ENCODE measurements at regions of chr13 and their contacts with region 1.

Region 1: GRCh38 chr13:23466144-23467002 is 32.9 kb upstream of the SACS start:
- DNase-seq: peak; percentile 72
- H3K4me3 Mint-ChIP-seq: peak overlapping the region; percentile 58
- H3K27ac Mint-ChIP-seq: no peak overlapping the region
- H3K4me1 Mint-ChIP-seq: peaks cover 5% of the 10 kb centered on the region
- H3K27me3 Mint-ChIP-seq: peaks cover 6% of the 10 kb centered on the region

Region 2: DNA sequence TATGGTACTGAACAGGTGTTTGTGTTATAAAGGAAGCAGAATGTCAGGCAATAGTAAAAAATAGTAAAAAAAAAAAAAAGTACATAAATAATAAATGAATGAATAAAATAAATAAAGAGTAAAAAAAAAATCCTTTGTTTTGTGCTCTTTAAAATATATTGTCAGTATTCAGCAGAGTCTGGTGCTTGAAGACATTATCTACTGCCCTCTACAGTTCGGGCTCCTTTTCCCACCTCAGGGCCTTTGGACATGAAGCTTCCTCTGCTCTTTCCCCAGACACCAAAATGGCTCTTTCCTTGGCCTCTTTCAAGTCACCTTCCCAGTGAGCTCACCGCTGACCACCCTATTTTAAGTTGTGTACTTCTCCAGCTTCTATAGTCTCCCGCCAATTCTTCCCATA is 241.3 kb after region 1 on chr13:
- CTCF ChIA-PET with region 1: interaction called, 3 read pairs
- POLR2A ChIA-PET with region 1: no interaction called
- intact Hi-C with region 1: loop called (anchors 5 kb)
- DNase-seq: no peak
- H3K4me3 Mint-ChIP-seq: no peak overlapping the region
- H3K27ac Mint-ChIP-seq: no peak overlapping the region
- H3K4me1 Mint-ChIP-seq: no peaks in the 10 kb centered on the region
- H3K27me3 Mint-ChIP-seq: no peaks in the 10 kb centered on the region

Region 3: GRCh38 chr13:23741879-23742510 is 275.6 kb after region 1 on chr13:
- CTCF ChIA-PET with region 1: no interaction called
- POLR2A ChIA-PET with region 1: no interaction called
- intact Hi-C with region 1: loop called (anchors 1 kb)
- DNase-seq: no peak
- H3K4me3 Mint-ChIP-seq: no peak overlapping the region
- H3K27ac Mint-ChIP-seq: no peak overlapping the region
- H3K4me1 Mint-ChIP-seq: peaks cover 25% of the 10 kb centered on the region
- H3K27me3 Mint-ChIP-seq: peaks cover 3% of the 10 kb centered on the region

Region 4: GRCh38 chr13:23871616-23872220 is 405.3 kb after region 1 on chr13:
- CTCF ChIA-PET with region 1: interaction called, 5 read pairs
- POLR2A ChIA-PET with region 1: no interaction called
- intact Hi-C with region 1: loop called (anchors 1 kb)
- DNase-seq: no peak
- H3K4me3 Mint-ChIP-seq: no peak overlapping the region
- H3K27ac Mint-ChIP-seq: no peak overlapping the region
- H3K4me1 Mint-ChIP-seq: no peaks in the 10 kb centered on the region
- H3K27me3 Mint-ChIP-seq: no peaks in the 10 kb centered on the region

Region 5: DNA sequence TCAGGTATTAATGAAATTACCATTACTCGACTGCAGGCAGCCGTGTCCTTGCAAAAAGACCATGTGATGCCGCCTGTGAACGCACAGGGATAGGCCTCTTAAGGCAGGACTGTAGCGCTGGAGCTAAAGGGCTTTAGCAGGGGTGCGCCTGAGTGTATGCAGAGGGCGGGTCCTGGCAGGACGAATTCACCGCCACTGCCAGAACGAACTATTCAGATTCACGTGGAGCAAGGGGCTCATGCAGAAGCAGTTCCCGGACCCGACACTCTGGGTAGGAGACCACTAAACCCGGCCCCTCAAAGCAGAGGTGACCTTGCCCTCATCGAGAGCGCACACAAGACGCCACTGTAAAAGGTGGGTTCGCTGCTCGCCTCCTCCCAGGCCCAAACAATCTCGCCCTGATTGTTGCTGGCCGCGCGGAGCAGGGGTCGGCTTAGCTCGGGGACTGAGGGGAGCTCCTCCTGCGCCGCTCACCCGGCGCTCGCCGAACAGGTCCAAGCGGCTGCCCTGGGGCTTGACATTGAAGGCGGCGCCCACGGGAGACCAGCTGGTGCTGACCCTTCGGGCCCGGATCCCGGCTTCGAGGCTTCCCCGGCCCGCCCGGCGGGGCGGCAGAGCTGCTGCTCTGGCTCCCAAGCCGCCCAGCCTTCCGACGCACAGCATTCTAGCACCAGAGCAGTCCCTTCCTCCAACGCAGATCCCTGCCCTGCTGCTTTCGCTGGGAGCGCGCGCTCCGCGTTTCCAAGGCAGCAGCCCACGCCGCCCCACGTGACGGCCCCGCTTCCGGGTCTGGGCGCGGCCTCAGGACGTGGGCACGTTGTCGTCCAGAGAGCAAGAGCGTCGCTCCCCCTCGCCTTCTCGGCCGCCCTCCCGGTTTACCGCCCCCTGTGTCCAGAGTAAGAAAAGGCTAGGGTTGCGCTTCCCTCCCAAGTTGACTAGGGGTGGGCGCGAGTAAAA is 422.6 kb after region 1 on chr13 and contains the start of gene MIPEP:
- CTCF ChIA-PET with region 1: interaction called, 7 read pairs
- POLR2A ChIA-PET with region 1: no interaction called
- intact Hi-C with region 1: loop called (anchors 5 kb)
- DNase-seq: peak; percentile 95
- H3K4me3 Mint-ChIP-seq: peak within 1 kb of the TSS; percentile 82
- H3K27ac Mint-ChIP-seq: peak within 1 kb of the TSS; percentile 62
- H3K4me1 Mint-ChIP-seq: peaks cover 21% of the 10 kb centered on the region
- H3K27me3 Mint-ChIP-seq: no peaks in the 10 kb centered on the region
- total RNA-seq, gene MIPEP: 16.6 to 16.7 TPM

Region 6: GRCh38 chr13:23899555-23899954 is 433.2 kb after region 1 on chr13:
- CTCF ChIA-PET with region 1: interaction called, 11 read pairs
- POLR2A ChIA-PET with region 1: no interaction called
- intact Hi-C with region 1: no loop called
- DNase-seq: no peak
- H3K4me3 Mint-ChIP-seq: no peak overlapping the region
- H3K27ac Mint-ChIP-seq: no peak overlapping the region
- H3K4me1 Mint-ChIP-seq: peaks cover 2% of the 10 kb centered on the region
- H3K27me3 Mint-ChIP-seq: peaks cover 24% of the 10 kb centered on the region

Measured in activated CD4-positive, alpha-beta memory T cell treated with anti-CD3 and anti-CD28 coated beads for 36 hours (primary cell).